ENCODE measurements at regions of chr1 and their contacts with region 1.

Region 1: DNA sequence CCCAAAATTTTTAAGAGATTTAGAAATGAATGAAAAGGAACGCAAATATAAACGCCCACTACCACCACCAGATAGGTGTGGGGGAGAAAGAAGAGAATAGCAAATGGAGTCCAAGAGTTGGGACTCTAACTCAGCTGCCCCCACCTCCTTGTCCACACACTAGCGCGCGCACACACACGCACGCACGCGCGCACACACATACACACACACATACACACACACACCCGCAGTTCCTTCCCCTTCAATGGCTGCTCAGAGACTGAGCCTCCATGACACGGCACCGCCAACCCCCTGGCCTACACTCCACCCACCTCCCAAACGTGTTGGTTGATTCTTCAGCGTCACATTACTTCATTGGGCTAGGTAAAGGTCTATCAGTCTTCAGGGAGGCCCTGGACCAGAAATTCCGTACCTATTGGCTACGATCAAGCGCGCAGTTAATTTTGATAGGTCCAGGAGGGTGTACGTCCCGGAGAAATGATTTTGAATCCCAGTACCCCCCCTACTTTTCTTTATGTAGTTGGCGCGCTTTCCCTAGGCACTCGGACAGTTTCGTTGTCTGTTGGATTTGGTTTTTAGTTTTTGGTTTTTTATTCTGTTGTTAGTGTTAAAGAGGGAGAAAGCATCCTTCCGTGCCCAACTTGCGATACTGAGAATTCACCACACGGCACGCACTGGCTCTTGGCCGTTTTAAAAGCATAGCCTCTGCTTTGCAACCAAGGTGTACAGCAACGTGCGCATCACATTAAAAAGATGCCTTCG is at the start of gene ANP32E:
- DNase-seq: peak; percentile 75 to 99 (median 98)
- ATAC-seq: peak; percentile 94
- H3K4me3 ChIP-seq: peak within 1 kb of the TSS; percentile 98
- H3K4me3 Mint-ChIP-seq: peak within 1 kb of the TSS in 3 of 10 donors; percentile 10 to 93 (median 60)
- H3K27ac ChIP-seq: peak within 1 kb of the TSS; percentile 97
- H3K27ac Mint-ChIP-seq: peak within 1 kb of the TSS in 4 of 9 donors; percentile 97 to 99 (median 98)
- H3K4me1 ChIP-seq: peaks cover 0 to 7% of the 10 kb centered on the region in 2 donors
- H3K4me1 Mint-ChIP-seq: peaks cover 11 to 22% (median 18%) of the 10 kb centered on the region in 7 donors
- H3K27me3 ChIP-seq: no peaks in the 10 kb centered on the region
- H3K27me3 Mint-ChIP-seq: peaks cover 0 to 4% (median 0%) of the 10 kb centered on the region in 5 donors
- total RNA-seq, gene ANP32E: 35.6 to 156 (median 44.8) TPM

Region 2: DNA sequence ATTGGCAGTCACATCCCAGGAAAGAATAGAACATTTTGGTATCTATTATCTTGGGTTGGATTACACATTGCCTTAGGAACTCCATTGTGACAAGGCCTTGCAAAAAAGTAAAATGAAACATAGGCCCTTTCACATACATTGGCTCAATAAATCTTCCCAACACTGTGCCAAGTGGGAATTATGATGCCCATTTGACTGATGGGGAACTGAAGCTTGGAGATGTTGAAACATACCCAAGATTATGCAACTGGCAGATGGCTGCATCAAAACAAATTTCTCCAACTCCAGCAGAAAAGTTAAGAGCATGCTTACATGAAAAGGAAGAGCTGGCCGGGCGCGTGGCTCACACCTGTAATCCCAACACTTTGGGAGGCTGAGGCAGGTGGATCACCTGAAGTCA is 59.4 kb before region 1 on chr1:
- CTCF ChIA-PET with region 1: no interaction called
- POLR2A ChIA-PET with region 1: no interaction called
- intact Hi-C with region 1: no loop called
- DNase-seq: no peak
- ATAC-seq: no peak
- H3K4me3 ChIP-seq: no peak overlapping the region
- H3K4me3 Mint-ChIP-seq: no peak overlapping the region
- H3K27ac ChIP-seq: no peak overlapping the region
- H3K27ac Mint-ChIP-seq: peak overlapping the region in 1 of 9 donors; percentile 23
- H3K4me1 ChIP-seq: no peaks in the 10 kb centered on the region
- H3K4me1 Mint-ChIP-seq: peaks cover 0 to 6% (median 0%) of the 10 kb centered on the region in 7 donors
- H3K27me3 ChIP-seq: no peaks in the 10 kb centered on the region
- H3K27me3 Mint-ChIP-seq: peaks cover 0 to 3% (median 0%) of the 10 kb centered on the region in 5 donors

Region 3: GRCh38 chr1:150213170-150214098 is 22.6 kb before region 1 on chr1:
- CTCF ChIA-PET with region 1: interaction called, 3 read pairs
- POLR2A ChIA-PET with region 1: interaction called, 21 read pairs
- intact Hi-C with region 1: loop called (anchors 1 kb)
- DNase-seq: peak; percentile 72 to 92 (median 88)
- ATAC-seq: peak; percentile 100
- H3K4me3 ChIP-seq: peak overlapping the region; percentile 59
- H3K4me3 Mint-ChIP-seq: peak overlapping the region; percentile 75 to 95 (median 92)
- H3K27ac ChIP-seq: peak overlapping the region; percentile 69
- H3K27ac Mint-ChIP-seq: peak overlapping the region; percentile 84 to 98 (median 97)
- H3K4me1 ChIP-seq: peaks cover 6% of the 10 kb centered on the region in 2 donors
- H3K4me1 Mint-ChIP-seq: peaks cover 5 to 19% (median 18%) of the 10 kb centered on the region in 7 donors
- H3K27me3 ChIP-seq: no peaks in the 10 kb centered on the region
- H3K27me3 Mint-ChIP-seq: peaks cover 0 to 11% (median 0%) of the 10 kb centered on the region in 5 donors

Region 4: DNA sequence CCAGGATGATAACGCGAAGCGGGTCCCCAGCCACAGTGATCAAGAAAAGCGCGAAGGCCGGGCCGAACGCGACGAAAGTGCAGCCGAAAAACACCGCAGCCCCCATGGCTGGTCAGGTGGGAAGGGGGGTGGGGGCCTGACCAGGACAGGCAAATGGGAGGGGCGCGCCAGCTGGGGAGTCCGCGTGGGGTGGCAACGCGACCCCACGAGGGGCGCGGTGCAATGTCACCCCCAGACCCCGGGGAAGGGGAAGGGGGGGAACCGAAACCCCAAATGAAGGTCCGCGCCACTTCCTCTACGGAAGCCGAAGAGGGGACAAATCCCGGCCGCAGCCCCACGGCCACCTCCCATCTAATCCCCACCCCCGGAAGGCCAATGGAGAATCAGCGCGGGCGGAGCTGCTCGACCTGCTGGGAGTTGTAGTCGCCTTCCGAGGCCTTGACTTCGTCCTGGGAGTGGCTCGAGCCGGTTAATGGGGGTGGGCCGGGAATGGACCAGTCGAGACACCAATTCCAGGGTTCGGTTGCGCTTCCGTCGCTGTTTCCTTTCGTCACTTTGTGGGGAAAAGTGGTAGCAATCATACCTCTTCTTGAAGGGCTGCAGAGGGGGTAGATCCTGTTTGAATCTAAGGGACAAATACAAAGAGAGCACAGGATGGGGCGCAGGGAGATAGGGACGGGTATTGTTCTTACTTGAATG is 32.8 kb after region 1 on chr1 and contains the start of gene APH1A:
- CTCF ChIA-PET with region 1: no interaction called
- POLR2A ChIA-PET with region 1: interaction called, 6 read pairs
- intact Hi-C with region 1: loop called (anchors 1 kb)
- DNase-seq: peak; percentile 69 to 92 (median 89)
- ATAC-seq: peak; percentile 97
- H3K4me3 ChIP-seq: peak within 1 kb of the TSS; percentile 87
- H3K4me3 Mint-ChIP-seq: peak within 1 kb of the TSS; percentile 94 to 99 (median 96)
- H3K27ac ChIP-seq: peak within 1 kb of the TSS; percentile 97
- H3K27ac Mint-ChIP-seq: peak within 1 kb of the TSS; percentile 88 to 99 (median 94)
- H3K4me1 ChIP-seq: peaks cover 13 to 20% of the 10 kb centered on the region in 2 donors
- H3K4me1 Mint-ChIP-seq: peaks cover 25 to 39% (median 30%) of the 10 kb centered on the region in 7 donors
- H3K27me3 ChIP-seq: no peaks in the 10 kb centered on the region
- H3K27me3 Mint-ChIP-seq: no peaks in the 10 kb centered on the region
- total RNA-seq, gene APH1A: 112 to 143 (median 127) TPM

Region 5: GRCh38 chr1:150293433-150294168 is 57.6 kb after region 1 on chr1 and contains the start of gene MRPS21:
- CTCF ChIA-PET with region 1: no interaction called
- POLR2A ChIA-PET with region 1: no interaction called
- intact Hi-C with region 1: loop called (anchors 1 kb)
- DNase-seq: peak; percentile 64 to 88 (median 83)
- ATAC-seq: peak; percentile 99
- H3K4me3 ChIP-seq: peak within 1 kb of the TSS; percentile 76
- H3K4me3 Mint-ChIP-seq: peak within 1 kb of the TSS; percentile 85 to 97 (median 92)
- H3K27ac ChIP-seq: peak within 1 kb of the TSS; percentile 92
- H3K27ac Mint-ChIP-seq: peak within 1 kb of the TSS; percentile 92 to 100 (median 98)
- H3K4me1 ChIP-seq: peaks cover 10 to 14% of the 10 kb centered on the region in 2 donors
- H3K4me1 Mint-ChIP-seq: peaks cover 20 to 45% (median 32%) of the 10 kb centered on the region in 7 donors
- H3K27me3 ChIP-seq: no peaks in the 10 kb centered on the region
- H3K27me3 Mint-ChIP-seq: no peaks in the 10 kb centered on the region
- total RNA-seq, gene MRPS21: 47.9 to 72.8 (median 67.5) TPM

Region 6: DNA sequence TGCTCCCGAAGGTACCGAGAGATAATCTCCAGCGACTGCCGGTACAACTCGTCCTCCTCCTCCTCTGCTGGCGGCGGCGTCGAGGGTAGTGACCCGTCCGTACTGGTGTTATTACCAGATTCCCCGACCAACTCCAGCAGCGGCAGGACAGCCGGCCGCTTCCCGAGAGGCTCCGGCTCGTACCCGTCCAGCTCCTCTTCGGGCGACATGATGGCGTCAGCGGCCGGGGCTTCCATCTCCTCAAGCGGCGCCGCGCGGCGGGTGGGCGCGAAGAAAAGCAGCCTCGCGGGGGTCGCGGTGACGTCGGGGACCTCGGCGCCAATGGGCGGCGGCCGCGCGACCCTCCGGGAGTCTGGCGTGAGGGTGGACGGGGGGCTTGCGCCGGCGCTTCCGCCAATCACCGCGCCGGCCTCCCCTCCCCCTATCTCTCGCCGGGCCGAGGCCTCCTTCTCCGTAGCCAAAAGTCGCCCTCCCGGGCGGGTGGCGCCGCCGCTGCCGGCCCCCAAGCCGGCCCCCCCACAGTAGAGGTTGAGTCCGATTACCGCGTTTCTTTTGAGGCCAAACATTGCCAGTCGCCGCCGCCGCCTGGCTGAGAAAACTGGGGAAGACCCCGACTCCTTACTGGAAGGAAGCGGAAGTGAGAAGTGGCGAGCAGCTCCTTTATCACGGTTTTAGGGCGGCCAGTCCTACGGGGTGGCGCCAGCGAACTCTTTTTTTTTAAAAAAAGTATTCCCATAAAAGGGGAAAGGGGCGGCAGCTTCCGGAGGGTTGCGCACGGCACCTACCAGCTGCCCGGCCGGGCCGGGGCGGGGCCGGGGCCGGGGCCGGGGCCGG is 343.1 kb after region 1 on chr1 and contains the start of gene MCL1:
- CTCF ChIA-PET with region 1: no interaction called
- POLR2A ChIA-PET with region 1: interaction called, 4 read pairs
- intact Hi-C with region 1: loop called in 1 of 2 experiments (anchors 1 kb)
- DNase-seq: peak; percentile 75 to 88 (median 83)
- ATAC-seq: peak; percentile 90
- H3K4me3 ChIP-seq: peak within 1 kb of the TSS; percentile 95
- H3K4me3 Mint-ChIP-seq: peak within 1 kb of the TSS; percentile 92 to 99 (median 95)
- H3K27ac ChIP-seq: peak within 1 kb of the TSS; percentile 97
- H3K27ac Mint-ChIP-seq: peak within 1 kb of the TSS; percentile 96 to 99 (median 98)
- H3K4me1 ChIP-seq: peaks cover 3 to 15% of the 10 kb centered on the region in 2 donors
- H3K4me1 Mint-ChIP-seq: peaks cover 25 to 39% (median 29%) of the 10 kb centered on the region in 7 donors
- H3K27me3 ChIP-seq: no peaks in the 10 kb centered on the region
- H3K27me3 Mint-ChIP-seq: peaks cover 0 to 7% (median 0%) of the 10 kb centered on the region in 5 donors
- total RNA-seq, gene MCL1: 302 to 1,400 (median 377) TPM

Region 7: GRCh38 chr1:150876119-150876454 is 640.1 kb after region 1 on chr1:
- CTCF ChIA-PET with region 1: no interaction called
- POLR2A ChIA-PET with region 1: interaction called, 3 read pairs
- intact Hi-C with region 1: loop called in 1 of 2 experiments (anchors 1 kb)
- DNase-seq: no peak
- ATAC-seq: peak; percentile 50
- H3K4me3 ChIP-seq: peak overlapping the region; percentile 68
- H3K4me3 Mint-ChIP-seq: peak overlapping the region; percentile 87 to 96 (median 95)
- H3K27ac ChIP-seq: peak overlapping the region; percentile 83
- H3K27ac Mint-ChIP-seq: peak overlapping the region; percentile 89 to 97 (median 94)
- H3K4me1 ChIP-seq: peaks cover 0 to 19% of the 10 kb centered on the region in 2 donors
- H3K4me1 Mint-ChIP-seq: peaks cover 13 to 45% (median 37%) of the 10 kb centered on the region in 7 donors
- H3K27me3 ChIP-seq: no peaks in the 10 kb centered on the region
- H3K27me3 Mint-ChIP-seq: no peaks in the 10 kb centered on the region

Measured in naive thymus-derived CD4-positive, alpha-beta T cell (primary cell).